ENCODE measurements at regions of chr14 and their contacts with region 1.

Region 1: GRCh38 chr14:45253068-45253753 is at the start of gene MIS18BP1:
- DNase-seq: peak; percentile 97
- ATAC-seq: peak; percentile 92
- H3K4me3 Mint-ChIP-seq: peak within 1 kb of the TSS; percentile 84
- H3K27ac Mint-ChIP-seq: peak within 1 kb of the TSS; percentile 97
- H3K4me1 Mint-ChIP-seq: peaks cover 23% of the 10 kb centered on the region
- H3K27me3 Mint-ChIP-seq: no peaks in the 10 kb centered on the region
- total RNA-seq, gene MIS18BP1: 67.0 to 88.4 TPM

Region 2: GRCh38 chr14:44897045-44897844 is 356.0 kb before region 1 on chr14:
- CTCF ChIA-PET with region 1: interaction called, 5 read pairs
- POLR2A ChIA-PET with region 1: interaction called, 5 read pairs
- intact Hi-C with region 1: loop called (anchors 1 kb)
- DNase-seq: peak; percentile 99
- ATAC-seq: peak; percentile 99
- H3K4me3 Mint-ChIP-seq: peak overlapping the region; percentile 82
- H3K27ac Mint-ChIP-seq: peak overlapping the region; percentile 90
- H3K4me1 Mint-ChIP-seq: peaks cover 13% of the 10 kb centered on the region
- H3K27me3 Mint-ChIP-seq: no peaks in the 10 kb centered on the region

Region 3: DNA sequence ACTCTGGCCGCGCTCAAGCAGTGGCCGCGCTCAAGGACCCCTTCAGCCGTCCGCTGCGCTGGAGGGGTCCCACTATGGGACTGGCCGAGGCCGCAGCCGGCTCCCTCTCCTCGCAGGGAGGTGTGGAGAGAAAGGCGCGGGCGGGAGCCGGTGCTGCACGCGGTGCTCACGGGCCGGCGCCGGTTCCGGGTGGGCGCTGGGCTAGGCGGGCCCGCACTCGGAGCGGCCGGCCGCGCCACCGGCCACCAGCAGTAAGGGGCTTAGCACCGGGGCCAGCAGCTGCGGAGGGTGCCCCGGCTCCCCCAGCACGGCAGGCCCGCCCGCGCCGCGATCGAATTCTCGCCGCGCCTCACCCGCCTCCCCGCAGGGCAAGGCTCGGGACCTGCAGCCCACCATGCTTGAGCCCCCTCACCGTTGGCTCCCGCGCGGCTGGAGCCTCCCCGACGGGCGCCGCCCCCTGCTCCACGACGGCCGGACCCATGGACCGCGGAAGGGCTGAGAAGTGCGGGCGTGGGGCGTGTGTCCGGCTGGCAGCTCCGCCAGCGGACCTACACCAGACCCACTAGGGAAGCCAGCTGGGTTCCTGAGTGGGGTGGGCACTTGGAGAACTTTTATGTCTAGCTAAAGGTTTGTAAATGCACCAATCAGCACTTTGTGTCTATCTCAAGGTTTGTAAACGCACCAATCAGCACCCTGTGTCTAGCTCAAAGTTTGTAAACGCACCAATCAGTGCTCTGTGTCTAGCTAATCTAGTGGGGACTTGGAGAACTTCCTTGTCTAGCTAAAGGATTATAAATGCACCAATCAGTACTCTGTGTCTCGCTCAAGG is 341.0 kb before region 1 on chr14:
- CTCF ChIA-PET with region 1: no interaction called
- POLR2A ChIA-PET with region 1: no interaction called
- intact Hi-C with region 1: loop called in 1 of 2 experiments (anchors 5 kb)
- DNase-seq: no peak
- ATAC-seq: peak; percentile 12
- H3K4me3 Mint-ChIP-seq: no peak overlapping the region
- H3K27ac Mint-ChIP-seq: no peak overlapping the region
- H3K4me1 Mint-ChIP-seq: no peaks in the 10 kb centered on the region
- H3K27me3 Mint-ChIP-seq: peaks cover 27% of the 10 kb centered on the region

Region 4: GRCh38 chr14:44961604-44962333 is 291.4 kb before region 1 on chr14 and contains the starts of genes KLHL28 and TOGARAM1:
- CTCF ChIA-PET with region 1: interaction called, 3 read pairs
- POLR2A ChIA-PET with region 1: no interaction called
- intact Hi-C with region 1: loop called (anchors 1 to 2 kb)
- DNase-seq: peak; percentile 96
- ATAC-seq: peak; percentile 94
- H3K4me3 Mint-ChIP-seq: no peak within 1 kb of the TSS
- H3K27ac Mint-ChIP-seq: no peak within 1 kb of the TSS
- H3K4me1 Mint-ChIP-seq: peaks cover 51% of the 10 kb centered on the region
- H3K27me3 Mint-ChIP-seq: no peaks in the 10 kb centered on the region
- total RNA-seq, gene KLHL28: 11.3 to 12.3 TPM
- total RNA-seq, gene TOGARAM1: 5.7 to 6.6 TPM

Region 5: DNA sequence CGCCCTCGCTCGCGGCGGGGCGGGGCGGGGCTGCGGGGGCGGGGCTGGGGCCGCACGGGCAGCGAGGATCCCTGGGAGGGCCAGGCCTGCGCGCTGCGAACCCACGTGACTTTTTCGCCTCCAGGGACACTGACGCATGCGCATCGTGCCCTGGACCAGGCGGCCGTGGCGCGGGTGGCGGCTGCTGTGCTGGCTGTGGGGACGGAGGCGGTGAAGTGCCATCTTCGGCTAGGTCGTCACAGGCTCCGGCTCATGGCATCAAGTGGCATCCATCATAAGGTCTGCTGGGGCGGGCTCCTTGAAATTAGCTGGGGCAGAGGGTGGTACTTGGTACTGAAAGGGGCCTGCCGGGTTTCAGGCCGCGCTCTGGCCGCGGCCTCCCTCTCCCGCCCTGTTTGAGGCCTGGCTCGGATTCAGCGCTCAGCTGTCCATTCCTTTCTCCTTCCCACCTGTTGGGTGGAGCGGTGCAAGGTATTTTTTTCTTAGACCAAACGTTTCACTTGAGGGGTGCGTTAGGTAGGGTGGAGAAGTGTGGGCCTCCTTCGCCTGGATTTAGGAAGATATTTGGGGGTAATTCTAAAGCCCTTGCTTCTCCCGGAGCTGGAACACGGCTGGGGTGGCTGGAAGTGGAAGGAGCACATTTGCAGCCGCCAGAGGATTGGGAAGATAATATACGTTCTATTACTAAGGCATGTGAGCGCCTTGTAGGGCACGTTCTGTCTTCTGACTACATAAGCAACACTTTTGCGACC is 169.1 kb before region 1 on chr14 and contains the start of gene PRPF39:
- CTCF ChIA-PET with region 1: no interaction called
- POLR2A ChIA-PET with region 1: no interaction called
- intact Hi-C with region 1: loop called (anchors 1 to 2 kb)
- DNase-seq: peak; percentile 97
- ATAC-seq: peak; percentile 96
- H3K4me3 Mint-ChIP-seq: peak within 1 kb of the TSS; percentile 93
- H3K27ac Mint-ChIP-seq: peak within 1 kb of the TSS; percentile 97
- H3K4me1 Mint-ChIP-seq: peaks cover 45% of the 10 kb centered on the region
- H3K27me3 Mint-ChIP-seq: no peaks in the 10 kb centered on the region
- total RNA-seq, gene PRPF39: 45.2 to 47.5 TPM

Region 6: DNA sequence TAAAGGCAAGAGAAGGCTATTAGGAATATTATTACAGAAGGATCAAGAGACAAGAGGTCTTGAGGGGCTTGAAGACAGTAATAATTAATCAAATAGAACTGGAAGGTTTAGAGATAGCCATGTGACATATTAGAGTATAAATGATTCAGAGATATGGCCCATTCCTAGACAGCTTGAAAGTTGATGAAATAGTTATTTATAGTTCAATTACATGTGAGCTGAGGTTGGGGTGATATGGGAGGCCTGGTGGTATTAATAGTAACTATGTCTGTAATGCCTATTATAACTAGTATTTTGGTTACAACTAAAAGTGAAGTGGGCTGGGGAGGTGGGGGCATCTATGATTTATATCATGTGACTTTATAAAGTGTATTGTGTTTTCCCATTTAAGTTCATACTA is 13.9 kb after region 1 on chr14:
- CTCF ChIA-PET with region 1: interaction called, 20 read pairs
- POLR2A ChIA-PET with region 1: no interaction called
- intact Hi-C with region 1: no loop called
- DNase-seq: no peak
- ATAC-seq: no peak
- H3K4me3 Mint-ChIP-seq: no peak overlapping the region
- H3K27ac Mint-ChIP-seq: no peak overlapping the region
- H3K4me1 Mint-ChIP-seq: no peaks in the 10 kb centered on the region
- H3K27me3 Mint-ChIP-seq: peaks cover 5% of the 10 kb centered on the region